Breast epithelium (tissue), 4 donors: ENCODE measurements at regions of chrX and their contacts with region 1.

Region 1: DNA sequence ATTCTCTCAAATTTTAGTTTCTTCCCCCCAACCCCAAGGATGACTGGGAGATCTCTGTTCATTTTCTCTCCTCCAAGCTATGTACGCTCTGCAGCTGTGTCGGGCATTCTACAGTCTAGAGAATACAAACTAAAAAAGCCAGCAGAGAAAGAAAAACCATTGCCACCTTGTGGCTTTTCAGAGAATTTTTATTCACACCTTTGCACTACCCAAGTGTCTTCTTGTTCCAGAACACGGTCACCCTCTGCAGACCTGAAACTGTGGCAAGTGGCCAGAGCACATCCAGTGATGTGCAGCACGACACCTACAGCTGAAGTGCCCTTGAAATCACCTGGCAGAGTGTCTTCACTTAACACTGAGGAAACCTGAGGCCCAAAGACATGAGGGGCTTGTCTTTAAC is 68.6 kb downstream of the CHST7 start:
- DNase-seq: no peak
- H3K4me3 ChIP-seq: no peak overlapping the region
- H3K27ac ChIP-seq: no peak overlapping the region
- H3K4me1 ChIP-seq: no peaks in the 10 kb centered on the region
- H3K27me3 ChIP-seq: peaks cover 0 to 14% of the 10 kb centered on the region in 2 donors
- CTCF ChIP-seq: peak in 2 of 3 donors; percentile 32 to 39
- POLR2A ChIP-seq: no peak

Region 2: GRCh38 chrX:46044486-46044885 is 597.7 kb before region 1 on chrX:
- intact Hi-C with region 1: no loop called
- DNase-seq: no peak
- H3K4me3 ChIP-seq: no peak overlapping the region
- H3K27ac ChIP-seq: no peak overlapping the region
- H3K4me1 ChIP-seq: no peaks in the 10 kb centered on the region
- H3K27me3 ChIP-seq: no peaks in the 10 kb centered on the region
- CTCF ChIP-seq: no peak
- POLR2A ChIP-seq: no peak

Region 3: DNA sequence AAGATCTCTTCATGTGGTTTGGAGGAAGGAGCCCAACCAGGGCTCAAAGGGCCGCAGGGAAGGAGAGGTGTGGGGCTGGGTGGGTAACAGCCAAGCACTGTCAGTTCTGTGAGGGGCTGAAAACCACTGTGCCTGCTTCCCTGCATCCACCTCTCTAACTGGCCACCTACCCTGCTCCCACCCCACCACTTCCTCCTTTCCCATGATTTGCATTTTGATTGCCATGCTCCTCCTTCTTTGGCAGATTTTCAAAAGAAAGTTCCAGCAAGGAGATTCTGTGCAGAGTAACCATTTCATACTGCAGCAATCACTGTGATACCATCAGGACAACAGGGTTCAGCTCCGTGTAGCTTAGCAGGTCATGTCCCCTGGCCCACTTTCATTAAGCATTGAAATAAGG is 98.7 kb before region 1 on chrX:
- intact Hi-C with region 1: loop called (anchors 5 kb)
- DNase-seq: no peak
- H3K4me3 ChIP-seq: no peak overlapping the region
- H3K27ac ChIP-seq: no peak overlapping the region
- H3K4me1 ChIP-seq: no peaks in the 10 kb centered on the region
- H3K27me3 ChIP-seq: peaks cover 0 to 18% of the 10 kb centered on the region in 2 donors
- CTCF ChIP-seq: no peak
- POLR2A ChIP-seq: no peak